BJ (cell line): ENCODE measurements at regions of chr9 and their contacts with region 1.

Region 1: DNA sequence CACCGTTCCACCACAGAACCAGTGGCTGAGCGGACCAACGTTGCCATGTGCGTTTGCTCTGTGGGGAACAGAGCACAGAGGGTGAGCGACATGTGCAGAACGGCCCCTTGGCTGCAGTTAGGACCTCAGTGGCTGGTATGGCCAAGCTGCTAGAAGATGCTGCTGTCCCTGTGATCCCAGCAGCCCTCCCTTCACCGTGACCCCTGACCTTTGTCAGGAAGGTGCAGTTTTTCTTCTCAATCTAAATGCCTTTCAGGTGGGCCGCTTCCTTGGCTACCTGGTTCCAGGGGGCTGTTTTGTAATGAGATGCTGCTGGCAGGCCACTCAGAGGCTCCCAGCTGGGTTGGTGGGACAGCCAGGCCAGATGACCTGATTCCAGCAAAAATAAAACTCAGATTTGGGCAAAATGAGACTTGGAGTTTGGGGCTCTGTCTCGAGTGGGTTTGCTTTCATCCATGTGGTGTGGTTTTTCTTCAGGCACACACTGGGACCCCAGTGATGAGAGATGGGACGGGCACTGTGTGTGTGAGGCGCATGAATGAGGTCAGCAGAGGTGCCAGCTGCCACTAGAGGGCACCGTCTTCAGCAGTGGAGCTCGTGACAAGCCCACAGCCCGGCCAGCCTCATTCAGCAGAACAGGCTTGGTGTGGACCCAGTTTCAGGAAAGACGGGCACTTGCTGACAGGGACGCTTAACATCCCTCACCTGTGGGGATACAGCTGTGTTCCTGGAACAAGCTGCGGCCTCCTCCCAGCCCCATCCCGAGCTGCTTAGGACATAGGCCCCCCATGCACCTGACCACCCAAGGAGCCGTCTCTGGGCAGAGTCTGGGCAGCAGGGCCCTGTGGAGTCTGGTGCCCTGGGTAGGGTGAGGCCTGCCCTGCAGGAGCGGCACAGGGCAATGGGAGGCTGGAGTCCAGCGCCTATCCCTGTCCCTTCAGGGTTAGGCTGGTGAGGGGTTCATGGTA is 4.1 kb downstream of the MRPS2 start:
- DNase-seq: no peak
- H3K4me3 ChIP-seq: no peak overlapping the region
- H3K27me3 ChIP-seq: no peaks in the 10 kb centered on the region
- CTCF ChIP-seq: peak; percentile 89

Region 2: GRCh38 chr9:135336738-135337527 is 167.6 kb before region 1 on chr9:
- CTCF ChIA-PET with region 1: no interaction called
- POLR2A ChIA-PET with region 1: no interaction called
- DNase-seq: no peak
- H3K4me3 ChIP-seq: no peak overlapping the region
- H3K27me3 ChIP-seq: no peaks in the 10 kb centered on the region
- CTCF ChIP-seq: no peak

Region 3: DNA sequence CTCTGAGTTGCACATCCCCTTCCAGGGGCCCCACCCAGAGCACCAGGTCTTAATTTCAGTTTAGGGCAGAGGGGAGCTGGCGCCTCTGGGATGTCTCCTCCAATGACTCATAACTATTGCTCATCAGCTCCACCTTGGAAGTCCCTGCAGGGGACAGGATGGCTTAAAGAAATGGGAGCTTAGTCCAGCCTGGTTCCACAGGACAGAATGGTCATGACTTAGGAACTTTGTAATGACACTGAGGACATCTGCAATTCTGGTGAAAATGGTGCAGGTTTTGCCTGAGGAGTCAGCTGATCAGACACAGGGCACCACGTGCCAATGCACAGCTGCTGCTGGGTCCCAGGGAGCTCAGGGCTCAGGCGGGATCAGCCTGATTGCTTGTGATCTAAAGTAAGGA is 41.4 kb before region 1 on chr9:
- CTCF ChIA-PET with region 1: no interaction called
- POLR2A ChIA-PET with region 1: no interaction called
- DNase-seq: no peak
- H3K4me3 ChIP-seq: no peak overlapping the region
- H3K27me3 ChIP-seq: no peaks in the 10 kb centered on the region
- CTCF ChIP-seq: no peak

Region 4: DNA sequence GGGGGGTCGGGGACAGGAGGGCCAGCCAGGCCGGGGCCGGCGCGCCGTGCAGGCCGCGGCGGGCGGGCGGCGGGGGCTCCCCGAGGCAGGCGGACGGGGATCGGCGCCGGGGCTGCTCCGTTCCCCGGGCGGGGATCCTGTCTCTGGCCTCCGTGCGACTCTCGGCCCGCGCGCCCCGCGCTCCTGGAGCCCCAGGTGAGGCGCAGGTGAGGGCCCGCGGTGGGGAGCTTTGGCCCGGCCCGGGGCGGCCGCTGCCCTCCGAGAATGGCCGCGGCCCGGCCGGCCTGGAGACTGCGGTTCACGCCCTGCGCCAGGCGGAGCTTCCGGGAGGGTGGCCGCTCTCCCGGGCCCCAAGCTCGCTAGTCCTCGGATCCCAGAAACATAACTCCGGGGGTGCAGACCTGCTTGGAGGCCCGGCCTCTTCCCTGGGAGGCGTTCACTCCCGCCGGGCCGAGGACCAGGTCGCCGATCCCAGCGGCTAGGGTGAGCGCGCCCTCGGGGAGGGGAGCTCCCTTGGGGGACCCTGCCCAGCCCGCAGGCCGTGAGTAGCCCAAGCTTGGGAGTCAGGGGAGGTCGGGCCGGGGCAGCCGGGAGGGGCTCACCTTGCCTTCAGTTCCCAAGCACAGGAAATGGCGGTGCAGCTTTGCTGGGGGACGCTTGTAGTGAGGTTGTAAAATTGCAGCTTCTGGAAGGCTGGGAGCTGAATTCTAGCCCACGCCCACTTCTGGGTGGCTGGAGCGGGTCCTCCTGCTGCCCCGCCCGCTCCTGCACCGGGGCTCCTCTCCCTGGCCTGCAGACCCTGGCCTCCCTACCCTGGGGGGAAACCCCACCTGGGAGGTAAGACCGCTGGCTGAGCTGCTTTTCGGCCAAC is 24.2 kb before region 1 on chr9:
- CTCF ChIA-PET with region 1: interaction called, 10 read pairs
- POLR2A ChIA-PET with region 1: no interaction called
- DNase-seq: no peak
- H3K4me3 ChIP-seq: peak overlapping the region; percentile 89
- H3K27me3 ChIP-seq: no peaks in the 10 kb centered on the region
- CTCF ChIP-seq: no peak

Region 5: GRCh38 chr9:135490980-135491464 is 13.5 kb before region 1 on chr9:
- CTCF ChIA-PET with region 1: interaction called, 12 read pairs
- POLR2A ChIA-PET with region 1: no interaction called
- DNase-seq: no peak
- H3K4me3 ChIP-seq: no peak overlapping the region
- H3K27me3 ChIP-seq: no peaks in the 10 kb centered on the region
- CTCF ChIP-seq: no peak

Region 6: GRCh38 chr9:135516132-135516860 is 11.8 kb after region 1 on chr9:
- CTCF ChIA-PET with region 1: interaction called, 10 read pairs
- POLR2A ChIA-PET with region 1: no interaction called
- DNase-seq: no peak
- H3K4me3 ChIP-seq: no peak overlapping the region
- H3K27me3 ChIP-seq: no peaks in the 10 kb centered on the region; the same call in 1 of the 2 replicates
- CTCF ChIP-seq: no peak

Region 7: GRCh38 chr9:135743546-135744332 is 239.2 kb after region 1 on chr9:
- CTCF ChIA-PET with region 1: no interaction called
- POLR2A ChIA-PET with region 1: no interaction called
- DNase-seq: no peak
- H3K4me3 ChIP-seq: no peak overlapping the region
- H3K27me3 ChIP-seq: no peaks in the 10 kb centered on the region
- CTCF ChIP-seq: no peak